Head of caudate nucleus (tissue), 42 donors: ENCODE measurements at regions of chr2 and their contacts with region 1.

Region 1: GRCh38 chr2:225041851-225042799 is at the start of gene DOCK10:
- DNase-seq: peak in 41 of 42 donors; percentile 46 to 86 (median 69)

Region 2: GRCh38 chr2:224802407-224802806 is 239.7 kb before region 1 on chr2:
- intact Hi-C with region 1: no loop called
- DNase-seq: no peak

Region 3: DNA sequence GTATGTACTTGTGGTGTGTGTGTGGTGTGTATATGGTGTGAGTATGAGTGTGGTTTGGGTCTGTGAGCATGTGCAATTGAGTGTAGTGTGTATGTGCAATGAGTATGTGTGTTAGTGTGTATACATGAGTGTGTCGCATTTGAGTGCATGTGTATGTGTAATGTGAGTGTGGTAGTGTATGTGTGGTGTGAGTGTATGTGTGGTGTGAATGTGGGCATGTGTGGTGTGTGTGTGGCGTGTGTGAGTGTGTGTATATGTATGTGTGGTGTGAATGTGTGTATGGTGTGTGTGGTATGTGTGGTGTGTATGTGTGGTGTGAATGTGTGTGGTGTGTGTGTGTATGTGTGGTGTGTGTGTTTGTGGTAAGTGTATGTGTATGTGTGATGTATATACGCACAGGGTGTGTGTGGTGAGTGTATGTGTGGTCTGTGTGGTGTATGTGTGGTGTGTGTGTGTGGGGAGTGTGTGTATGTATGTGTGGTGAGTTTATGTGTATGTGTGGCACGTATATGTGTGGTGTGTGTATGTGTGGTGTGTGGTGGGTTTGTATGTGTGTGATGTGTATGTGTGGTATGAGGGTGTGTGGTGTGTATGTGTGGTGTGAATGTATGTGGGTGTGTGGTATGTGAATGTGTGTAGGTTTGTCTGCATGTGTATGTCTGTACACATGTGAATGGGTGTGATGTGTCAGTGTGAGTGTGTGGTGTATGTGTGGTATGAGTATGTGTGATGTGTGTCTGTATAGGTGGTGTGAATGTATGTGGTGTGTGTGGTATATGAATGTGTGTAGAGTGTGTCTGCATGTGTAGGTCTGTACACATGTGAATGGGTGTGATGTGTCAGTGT is 123.3 kb before region 1 on chr2:
- intact Hi-C with region 1: no loop called
- DNase-seq: no peak

Region 4: DNA sequence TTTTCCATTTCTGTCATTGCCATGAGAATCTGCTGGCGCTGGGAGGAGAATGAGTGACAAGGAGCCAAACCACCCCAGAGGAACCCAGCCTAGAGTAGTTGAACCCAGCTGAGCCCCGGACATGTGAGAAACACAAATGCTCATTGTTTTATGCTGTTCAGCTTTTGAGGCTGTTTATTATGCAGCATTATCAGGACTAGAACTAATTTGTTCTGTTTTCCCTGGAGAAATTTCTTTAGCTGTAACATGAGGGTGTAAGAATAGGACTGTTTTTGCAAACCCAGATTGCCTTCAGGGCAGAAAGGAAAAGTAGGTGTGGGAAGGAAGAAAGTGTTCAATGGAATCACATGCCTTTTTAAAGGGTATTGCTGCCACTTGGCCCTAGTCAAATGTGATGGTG is 28.7 kb after region 1 on chr2:
- intact Hi-C with region 1: loop called (anchors 2 kb)
- DNase-seq: peak; percentile 25 to 91 (median 76)

Region 5: DNA sequence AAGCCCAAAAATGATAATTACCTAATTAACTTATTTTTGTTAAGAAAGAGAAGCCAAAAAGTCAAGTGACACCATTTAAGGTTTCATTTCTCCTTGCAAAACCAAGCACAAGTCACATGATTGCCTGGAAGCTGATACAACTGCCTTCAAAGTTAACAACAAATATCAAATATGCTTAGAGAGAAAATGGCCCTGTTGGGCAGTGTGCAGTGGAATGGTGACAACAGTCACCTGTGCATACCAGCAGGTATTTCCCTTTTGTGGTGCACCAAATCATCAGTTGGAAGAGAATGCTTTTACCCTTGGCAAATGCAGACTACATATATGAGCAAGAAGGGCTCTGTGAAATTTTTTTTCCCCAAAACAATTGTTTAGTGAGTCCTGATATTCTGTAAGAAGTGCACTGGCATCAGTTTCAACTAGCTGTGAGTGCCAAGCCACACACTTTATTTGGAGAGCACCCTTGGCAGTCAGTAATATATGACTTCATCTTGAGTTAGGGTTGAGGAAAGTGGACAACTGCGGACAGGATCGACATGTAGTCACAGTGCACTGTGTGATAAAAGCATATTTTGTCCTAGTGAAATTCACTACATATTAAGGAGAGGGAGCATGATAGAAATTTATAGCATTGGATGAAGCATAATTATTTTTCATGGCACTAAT is 75.1 kb after region 1 on chr2:
- intact Hi-C with region 1: loop called (anchors 5 kb)
- DNase-seq: peak in 1 of 42 donors; percentile 15

Region 6: DNA sequence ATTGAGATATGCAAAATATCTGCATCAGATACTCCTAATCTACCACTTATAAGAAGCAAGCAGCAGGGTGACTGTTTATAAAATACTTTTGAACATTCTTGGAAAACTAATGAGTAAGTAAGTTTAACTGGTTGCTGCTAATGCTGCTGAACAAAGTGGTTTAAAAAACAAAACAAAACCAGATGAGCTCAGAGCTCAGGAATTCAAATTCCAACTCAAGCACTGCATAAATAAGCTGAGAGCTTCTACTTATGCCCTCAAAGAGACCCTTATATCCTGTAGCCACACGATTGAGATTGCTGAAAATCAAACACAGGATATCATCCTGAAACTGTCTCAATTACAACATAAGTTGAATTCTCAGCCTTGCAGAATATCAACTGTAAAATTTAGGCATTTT is 295.1 kb after region 1 on chr2:
- intact Hi-C with region 1: no loop called
- DNase-seq: no peak